AG04449 (cell line): ENCODE measurements at regions of chr3 and their contacts with region 1.

Region 1: DNA sequence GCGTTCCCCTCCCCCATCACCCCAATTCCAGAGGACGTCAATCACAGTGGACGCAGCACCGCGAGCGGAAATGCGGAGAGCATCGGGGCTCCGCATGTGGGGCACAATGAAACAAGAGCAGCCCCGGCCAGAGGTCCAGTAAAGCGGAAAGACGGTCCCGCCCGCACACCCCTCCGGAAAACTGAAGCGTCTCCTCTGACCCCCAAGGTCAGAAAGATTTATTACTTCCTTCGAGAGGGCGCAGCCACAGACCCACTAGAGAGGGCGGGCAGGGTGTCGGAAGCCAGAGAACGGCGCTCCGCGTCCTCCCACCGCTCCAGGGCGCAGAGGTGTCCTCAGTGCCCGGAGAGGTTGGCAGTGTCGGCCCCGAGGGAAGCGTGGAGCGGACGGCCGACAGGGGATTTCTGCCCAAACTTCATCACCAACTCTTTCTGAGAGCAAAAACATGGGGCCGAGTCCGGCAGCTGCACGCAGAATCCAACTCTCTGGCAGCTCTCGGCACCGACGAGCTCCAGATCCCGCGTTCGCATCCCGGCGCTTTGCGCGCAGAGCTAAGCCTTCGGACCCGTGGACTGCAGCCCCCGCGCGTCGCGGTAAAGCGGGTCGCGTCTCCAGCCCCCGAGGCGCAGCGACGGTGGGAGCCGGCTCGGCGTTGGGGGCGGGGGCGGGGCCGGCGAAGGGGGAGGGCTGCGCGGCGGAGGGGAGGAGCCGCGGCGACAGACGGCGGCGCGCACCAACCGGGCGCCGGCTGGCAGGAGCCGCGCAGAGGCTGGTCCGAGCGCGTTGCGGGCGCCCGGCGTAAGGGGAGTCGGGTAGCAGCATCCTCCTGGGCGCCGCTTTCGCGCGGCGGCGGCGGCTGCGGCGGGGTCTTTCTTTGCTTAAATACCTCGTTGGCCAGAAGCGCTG is at the start of gene CHST2:
- DNase-seq: no peak
- H3K4me3 ChIP-seq: peak within 1 kb of the TSS; percentile 83
- CTCF ChIP-seq: no peak

Region 2: GRCh38 chr3:143132246-143132980 is 13.2 kb after region 1 on chr3:
- CTCF ChIA-PET with region 1: interaction called, 12 read pairs
- POLR2A ChIA-PET with region 1: no interaction called
- DNase-seq: no peak
- H3K4me3 ChIP-seq: no peak overlapping the region
- CTCF ChIP-seq: no peak

Region 3: GRCh38 chr3:143644370-143645089 is 525.3 kb after region 1 on chr3:
- CTCF ChIA-PET with region 1: interaction called, 37 read pairs
- POLR2A ChIA-PET with region 1: no interaction called
- DNase-seq: peak; percentile 26
- H3K4me3 ChIP-seq: no peak overlapping the region
- CTCF ChIP-seq: peak; percentile 63